Esophagus squamous epithelium (tissue), 5 donors: ENCODE measurements at regions of chr5 and their contacts with region 1.

Region 1: DNA sequence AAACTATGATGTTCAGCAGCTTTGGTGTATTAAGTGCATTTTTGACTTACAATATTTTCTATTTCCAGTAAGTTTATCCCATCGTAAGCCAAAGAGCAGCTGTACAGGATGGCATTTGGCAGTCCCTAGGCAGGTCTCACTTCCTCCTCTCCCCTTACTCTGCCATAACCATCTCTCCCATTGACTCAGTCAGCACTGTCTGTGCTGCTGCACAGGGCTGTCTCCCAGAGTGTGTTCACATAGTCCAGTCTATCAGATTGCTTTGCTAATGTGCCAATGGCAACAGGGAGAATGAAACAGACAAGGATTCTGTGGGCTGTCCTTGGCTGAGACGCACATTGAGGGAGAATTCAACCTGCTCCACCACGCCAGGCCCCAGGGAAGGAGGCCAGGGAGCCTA is 47.0 kb upstream of the CAST start:
- DNase-seq: no peak
- H3K4me3 ChIP-seq: no peak overlapping the region
- H3K27ac ChIP-seq: peak overlapping the region in 3 of 4 donors; percentile 18 to 82 (median 70)
- H3K4me1 ChIP-seq: peaks cover 13 to 42% (median 21%) of the 10 kb centered on the region in 3 donors
- H3K27me3 ChIP-seq: no peaks in the 10 kb centered on the region
- CTCF ChIP-seq: no peak
- POLR2A ChIP-seq: no peak

Region 2: GRCh38 chr5:96680759-96681470 is 65.7 kb after region 1 on chr5:
- intact Hi-C with region 1: loop called (anchors 5 kb)
- DNase-seq: no peak
- H3K4me3 ChIP-seq: no peak overlapping the region
- H3K27ac ChIP-seq: peak overlapping the region in 3 of 4 donors; percentile 29 to 54 (median 52)
- H3K4me1 ChIP-seq: peaks cover 0 to 51% (median 8%) of the 10 kb centered on the region in 3 donors
- H3K27me3 ChIP-seq: no peaks in the 10 kb centered on the region
- CTCF ChIP-seq: no peak
- POLR2A ChIP-seq: no peak

Region 3: DNA sequence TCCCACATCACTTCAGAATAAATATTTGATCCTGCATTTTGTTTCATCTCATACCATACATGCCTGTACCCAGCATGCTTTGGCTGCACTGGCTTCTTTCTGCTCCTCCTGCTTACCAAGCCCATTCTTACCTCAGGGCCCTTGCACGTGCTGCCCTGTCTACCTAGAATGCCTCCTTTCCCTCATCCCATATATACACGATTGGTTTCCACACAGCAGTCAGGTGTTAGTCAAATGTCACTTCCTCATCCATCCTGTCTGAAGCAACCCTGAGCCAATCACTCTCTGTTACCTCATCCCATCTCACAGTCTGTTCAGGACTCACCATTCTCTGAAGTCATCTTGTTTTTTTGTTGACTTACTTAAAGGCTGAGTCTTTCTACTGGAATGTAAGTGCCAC is 77.2 kb after region 1 on chr5:
- intact Hi-C with region 1: no loop called
- DNase-seq: no peak
- H3K4me3 ChIP-seq: no peak overlapping the region
- H3K27ac ChIP-seq: peak overlapping the region in 2 of 4 donors; percentile 16 to 47
- H3K4me1 ChIP-seq: peaks cover 0 to 21% (median 4%) of the 10 kb centered on the region in 3 donors
- H3K27me3 ChIP-seq: no peaks in the 10 kb centered on the region
- CTCF ChIP-seq: no peak
- POLR2A ChIP-seq: no peak